A673 (cell line): ENCODE measurements at regions of chr1 and their contacts with region 1.

Region 1: DNA sequence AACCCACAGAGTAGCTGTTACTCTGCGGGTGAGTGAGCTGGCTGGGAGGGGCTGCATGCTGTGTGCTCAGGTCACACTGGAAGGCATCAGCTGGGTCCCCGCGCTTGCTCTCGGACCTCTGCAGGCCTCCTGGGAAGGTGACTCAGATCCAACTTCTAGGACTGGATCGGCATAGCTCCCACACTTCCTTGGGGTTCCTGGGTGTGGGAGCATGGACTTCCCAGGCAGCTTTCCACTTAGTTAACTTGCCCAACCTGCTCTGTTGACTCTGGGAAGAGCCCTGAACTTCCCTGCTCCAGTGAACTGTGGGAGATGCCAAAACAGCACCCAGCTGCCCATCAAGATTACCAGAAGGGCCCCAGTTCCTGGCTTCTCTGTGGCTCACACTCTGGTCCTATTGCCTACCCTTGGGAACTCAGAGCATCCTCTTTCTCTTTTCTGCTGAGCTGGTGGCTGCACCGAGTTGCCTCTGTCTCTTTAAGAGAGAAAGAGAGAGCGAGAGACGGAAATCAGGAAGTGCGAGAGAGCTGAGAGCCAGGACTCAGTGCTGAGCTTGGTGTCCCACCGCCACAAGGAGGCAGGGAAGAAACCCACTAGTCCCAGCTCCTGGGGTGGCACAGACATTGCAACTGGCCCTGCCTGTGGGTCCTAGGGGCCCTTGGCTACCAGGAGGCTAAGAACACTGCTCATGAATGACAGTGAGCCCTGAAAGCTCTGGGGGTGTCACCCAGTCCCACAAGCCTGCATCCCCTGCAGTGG is at the start of gene IKBKE:
- DNase-seq: peak; percentile 71
- H3K4me3 ChIP-seq: peak within 1 kb of the TSS; percentile 47
- H3K27ac ChIP-seq: peak within 1 kb of the TSS; percentile 42
- H3K4me1 ChIP-seq: peaks cover 33% of the 10 kb centered on the region
- H3K27me3 ChIP-seq: no peaks in the 10 kb centered on the region
- CTCF ChIP-seq: peak; percentile 43
- total RNA-seq, gene IKBKE: 2.3 and 2.9 TPM in 2 replicates

Region 2: GRCh38 chr1:206612129-206612876 is 142.2 kb after region 1 on chr1 and contains the start of gene EIF2D:
- CTCF ChIA-PET with region 1: no interaction called
- POLR2A ChIA-PET with region 1: interaction called, 34 read pairs
- intact Hi-C with region 1: no loop called
- DNase-seq: peak; percentile 96
- H3K4me3 ChIP-seq: peak within 1 kb of the TSS; percentile 97
- H3K27ac ChIP-seq: peak within 1 kb of the TSS; percentile 95
- H3K4me1 ChIP-seq: peaks cover 6% of the 10 kb centered on the region
- H3K27me3 ChIP-seq: no peaks in the 10 kb centered on the region
- CTCF ChIP-seq: peak; percentile 96
- total RNA-seq, gene EIF2D: 32.6 and 32.7 TPM in 2 replicates

Region 3: GRCh38 chr1:206982216-206982615 is 512.1 kb after region 1 on chr1:
- CTCF ChIA-PET with region 1: no interaction called
- POLR2A ChIA-PET with region 1: no interaction called
- intact Hi-C with region 1: loop called (anchors 10 kb)
- DNase-seq: peak; percentile 31
- H3K4me3 ChIP-seq: no peak overlapping the region
- H3K27ac ChIP-seq: no peak overlapping the region
- H3K4me1 ChIP-seq: no peaks in the 10 kb centered on the region
- H3K27me3 ChIP-seq: peaks cover 53% of the 10 kb centered on the region
- CTCF ChIP-seq: peak; percentile 56

Region 4: GRCh38 chr1:207052911-207053769 is 583.0 kb after region 1 on chr1 and contains the start of gene PFKFB2:
- CTCF ChIA-PET with region 1: no interaction called
- POLR2A ChIA-PET with region 1: no interaction called
- intact Hi-C with region 1: no loop called
- DNase-seq: peak; percentile 97
- H3K4me3 ChIP-seq: peak within 1 kb of the TSS; percentile 61
- H3K27ac ChIP-seq: peak within 1 kb of the TSS; percentile 37
- H3K4me1 ChIP-seq: peaks cover 18% of the 10 kb centered on the region
- H3K27me3 ChIP-seq: no peaks in the 10 kb centered on the region
- CTCF ChIP-seq: no peak
- total RNA-seq, gene PFKFB2: 7.6 and 8.5 TPM in 2 replicates